ENCODE measurements at regions of chr1 and their contacts with region 1.

Region 1: GRCh38 chr1:179706339-179706941 is 36.7 kb upstream of the FAM163A start:
- DNase-seq: peak in 40 of 42 donors; percentile 5 to 86 (median 63)

Region 2: GRCh38 chr1:179814546-179814838 is 108.1 kb after region 1 on chr1:
- intact Hi-C with region 1: loop called (anchors 2 kb)
- DNase-seq: peak in 2 of 42 donors; percentile 53 to 65